Calu3 (cell line): ENCODE measurements at regions of chr12 and their contacts with region 1.

Region 1: GRCh38 chr12:114069507-114069906 is 103.4 kb upstream of the RBM19 start:
- DNase-seq: no peak
- H3K4me3 Mint-ChIP-seq: no peak overlapping the region
- H3K27ac Mint-ChIP-seq: no peak overlapping the region
- H3K4me1 Mint-ChIP-seq: no peaks in the 10 kb centered on the region
- H3K27me3 Mint-ChIP-seq: peaks cover 53% of the 10 kb centered on the region
- CTCF ChIP-seq: no peak

Region 2: GRCh38 chr12:114451657-114452056 is 382.1 kb after region 1 on chr12:
- CTCF ChIA-PET with region 1: interaction called, 13 read pairs
- intact Hi-C with region 1: no loop called
- DNase-seq: no peak
- H3K4me3 Mint-ChIP-seq: no peak overlapping the region
- H3K27ac Mint-ChIP-seq: no peak overlapping the region
- H3K4me1 Mint-ChIP-seq: no peaks in the 10 kb centered on the region
- H3K27me3 Mint-ChIP-seq: peaks cover 16% of the 10 kb centered on the region
- CTCF ChIP-seq: no peak